Endothelial cell of umbilical vein (primary cell): ENCODE measurements at regions of chr15 and their contacts with region 1.

Region 1: DNA sequence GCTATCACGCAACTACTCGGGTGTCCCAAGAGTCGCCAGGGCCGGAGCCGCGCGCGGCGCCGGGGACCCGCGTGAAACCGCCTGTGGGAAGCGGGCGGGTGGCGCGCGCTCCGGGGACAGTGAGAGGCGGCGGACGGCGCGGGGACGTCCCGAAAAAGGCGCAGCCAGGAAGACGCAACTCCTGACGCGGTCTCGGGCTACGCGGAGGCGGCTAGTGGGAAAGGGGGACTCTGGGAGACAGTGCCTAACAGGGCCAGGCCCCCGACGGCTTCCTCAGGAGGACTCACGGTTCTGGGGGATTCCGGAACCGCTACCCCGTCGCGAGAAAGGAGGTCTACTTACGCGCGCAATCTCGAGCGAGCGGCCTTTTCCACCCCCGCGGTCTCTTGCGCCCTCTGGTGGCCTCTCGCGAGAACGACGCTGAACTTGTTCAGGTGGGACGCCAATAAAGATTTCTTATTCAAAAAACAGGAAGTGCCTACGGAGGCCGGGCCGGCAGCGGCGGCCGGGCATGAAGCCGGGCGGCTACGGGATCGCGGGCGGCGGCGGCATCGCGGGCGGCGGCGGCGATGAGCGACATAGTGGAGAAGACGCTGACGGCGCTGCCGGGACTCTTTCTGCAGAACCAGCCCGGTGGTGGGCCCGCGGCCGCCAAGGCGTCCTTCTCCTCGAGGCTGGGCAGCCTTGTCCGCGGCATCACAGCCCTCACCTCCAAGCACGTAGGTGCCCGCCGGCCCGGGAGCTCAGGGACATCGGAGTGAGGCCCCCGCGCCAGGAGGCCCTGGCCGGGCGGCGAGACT is at the start of gene AP4E1:
- DNase-seq: peak; percentile 96
- H3K4me3 ChIP-seq: peak within 1 kb of the TSS; percentile 95 to 99 (median 96)
- H3K27ac ChIP-seq: peak within 1 kb of the TSS; percentile 76
- H3K4me1 ChIP-seq: peaks cover 10% of the 10 kb centered on the region
- H3K27me3 ChIP-seq: no peaks in the 10 kb centered on the region
- CTCF ChIP-seq: peak; percentile 87 to 90
- POLR2A ChIP-seq: peak; percentile 14
- total RNA-seq, gene AP4E1: 9.8 and 10.1 TPM in 2 replicates

Region 2: DNA sequence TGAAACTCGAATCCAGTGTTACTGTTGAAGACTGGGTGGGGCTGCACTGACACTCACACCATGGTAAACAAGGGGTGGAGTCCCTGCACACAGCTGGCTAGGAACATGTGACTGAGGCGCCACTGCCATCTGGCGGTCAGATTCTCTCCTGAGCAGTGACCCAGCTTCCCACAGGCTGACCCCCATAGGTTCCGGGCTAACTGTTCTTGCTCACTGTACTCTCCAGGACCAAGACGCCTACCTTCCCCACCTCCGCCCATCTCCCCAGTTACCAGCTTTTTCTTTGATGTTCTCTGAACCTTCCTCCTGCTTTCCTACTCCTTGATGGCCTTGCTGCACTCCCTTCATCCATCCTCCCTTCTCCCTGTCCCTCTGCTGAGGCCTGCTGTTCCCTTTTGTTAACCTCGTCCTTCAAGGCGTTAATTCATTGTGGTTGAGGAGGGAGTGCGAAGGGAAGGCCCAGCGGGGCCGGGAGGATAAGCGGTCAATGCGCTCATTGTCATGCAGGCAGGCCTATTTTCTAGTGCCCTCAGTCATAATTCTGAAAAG is 904.5 kb before region 1 on chr15:
- CTCF ChIA-PET with region 1: no interaction called
- POLR2A ChIA-PET with region 1: no interaction called
- dilution Hi-C with region 1: no loop called
- intact Hi-C with region 1: loop called (anchors 10 kb)
- DNase-seq: peak; percentile 63
- H3K4me3 ChIP-seq: no peak overlapping the region
- H3K27ac ChIP-seq: no peak overlapping the region
- H3K4me1 ChIP-seq: no peaks in the 10 kb centered on the region
- H3K27me3 ChIP-seq: peaks cover 0 to 28% of the 10 kb centered on the region in 2 experiments
- CTCF ChIP-seq: peak; percentile 74 to 75
- POLR2A ChIP-seq: no peak

Region 3: GRCh38 chr15:50605462-50605861 is 302.9 kb before region 1 on chr15:
- CTCF ChIA-PET with region 1: no interaction called
- POLR2A ChIA-PET with region 1: no interaction called
- dilution Hi-C with region 1: no loop called
- intact Hi-C with region 1: loop called (anchors 10 kb)
- DNase-seq: no peak
- H3K4me3 ChIP-seq: no peak overlapping the region
- H3K27ac ChIP-seq: no peak overlapping the region
- H3K4me1 ChIP-seq: no peaks in the 10 kb centered on the region
- H3K27me3 ChIP-seq: no peaks in the 10 kb centered on the region
- CTCF ChIP-seq: no peak
- POLR2A ChIP-seq: no peak

Region 4: DNA sequence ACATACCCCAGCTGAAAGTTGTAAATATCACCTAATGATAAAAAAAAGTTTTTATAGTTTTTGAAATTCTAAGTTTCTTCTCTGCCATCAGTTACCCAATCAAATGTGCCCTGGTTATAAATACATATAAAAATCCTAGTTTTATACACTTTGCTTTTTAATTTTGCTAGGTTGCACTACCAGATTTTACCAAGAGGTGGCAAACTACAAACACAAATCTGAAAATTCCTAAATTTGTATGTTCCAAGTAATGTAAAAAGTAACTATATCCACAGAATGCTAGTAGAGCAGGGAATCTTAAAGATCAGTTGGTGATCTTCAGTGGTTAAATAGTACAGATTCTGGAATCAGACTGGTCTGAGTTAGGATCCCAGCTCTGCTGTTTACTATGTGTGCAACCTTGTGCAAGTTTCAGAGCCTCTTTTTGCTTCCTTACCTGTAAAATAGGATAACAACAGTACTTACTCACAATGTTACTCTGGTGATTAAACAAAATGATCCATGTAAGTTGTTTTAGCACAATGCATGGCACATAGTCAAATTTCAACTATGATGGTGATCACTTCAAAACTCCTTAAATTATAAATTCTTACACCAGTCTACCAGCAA is 232.8 kb before region 1 on chr15:
- CTCF ChIA-PET with region 1: interaction called, 5 read pairs
- POLR2A ChIA-PET with region 1: no interaction called
- dilution Hi-C with region 1: no loop called
- intact Hi-C with region 1: loop called (anchors 1 kb)
- DNase-seq: peak; percentile 69
- H3K4me3 ChIP-seq: no peak overlapping the region
- H3K27ac ChIP-seq: no peak overlapping the region
- H3K4me1 ChIP-seq: no peaks in the 10 kb centered on the region
- H3K27me3 ChIP-seq: no peaks in the 10 kb centered on the region
- CTCF ChIP-seq: peak; percentile 36 to 41
- POLR2A ChIP-seq: no peak

Region 5: GRCh38 chr15:50876989-50877360 is 31.4 kb before region 1 on chr15:
- CTCF ChIA-PET with region 1: interaction called, 10 read pairs
- POLR2A ChIA-PET with region 1: no interaction called
- dilution Hi-C with region 1: no loop called
- intact Hi-C with region 1: loop called (anchors 2 kb)
- DNase-seq: peak; percentile 90
- H3K4me3 ChIP-seq: peak overlapping the region; percentile 19 to 72 (median 45)
- H3K27ac ChIP-seq: no peak overlapping the region
- H3K4me1 ChIP-seq: peaks cover 9% of the 10 kb centered on the region
- H3K27me3 ChIP-seq: peaks cover 10 to 16% of the 10 kb centered on the region in 2 experiments
- CTCF ChIP-seq: peak; percentile 89 to 96
- POLR2A ChIP-seq: no peak

Region 6: DNA sequence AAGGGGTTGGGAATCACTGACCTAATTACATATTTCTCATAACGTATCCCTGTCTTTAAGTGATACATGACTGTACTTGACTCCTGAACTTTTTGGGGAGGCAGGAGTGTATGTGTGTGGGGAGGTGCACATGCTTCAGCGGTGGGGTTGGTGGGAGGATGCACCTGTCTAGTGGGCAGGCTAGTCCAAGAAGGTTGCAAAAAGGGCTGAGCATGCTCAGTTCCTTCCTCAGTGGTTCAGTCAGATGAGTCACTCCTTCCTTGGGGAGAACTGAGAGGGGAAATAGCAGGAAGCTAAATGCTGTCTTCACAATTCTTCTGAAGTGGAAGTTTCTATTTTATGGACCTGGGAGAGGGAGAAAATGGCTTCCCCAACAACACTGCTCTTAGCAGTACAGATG is 24.5 kb before region 1 on chr15:
- CTCF ChIA-PET with region 1: interaction called, 10 read pairs
- POLR2A ChIA-PET with region 1: no interaction called
- dilution Hi-C with region 1: no loop called
- intact Hi-C with region 1: loop called (anchors 1 kb)
- DNase-seq: peak; percentile 71
- H3K4me3 ChIP-seq: no peak overlapping the region
- H3K27ac ChIP-seq: peak overlapping the region; percentile 68
- H3K4me1 ChIP-seq: peaks cover 23% of the 10 kb centered on the region
- H3K27me3 ChIP-seq: no peaks in the 10 kb centered on the region
- CTCF ChIP-seq: no peak
- POLR2A ChIP-seq: no peak

Region 7: DNA sequence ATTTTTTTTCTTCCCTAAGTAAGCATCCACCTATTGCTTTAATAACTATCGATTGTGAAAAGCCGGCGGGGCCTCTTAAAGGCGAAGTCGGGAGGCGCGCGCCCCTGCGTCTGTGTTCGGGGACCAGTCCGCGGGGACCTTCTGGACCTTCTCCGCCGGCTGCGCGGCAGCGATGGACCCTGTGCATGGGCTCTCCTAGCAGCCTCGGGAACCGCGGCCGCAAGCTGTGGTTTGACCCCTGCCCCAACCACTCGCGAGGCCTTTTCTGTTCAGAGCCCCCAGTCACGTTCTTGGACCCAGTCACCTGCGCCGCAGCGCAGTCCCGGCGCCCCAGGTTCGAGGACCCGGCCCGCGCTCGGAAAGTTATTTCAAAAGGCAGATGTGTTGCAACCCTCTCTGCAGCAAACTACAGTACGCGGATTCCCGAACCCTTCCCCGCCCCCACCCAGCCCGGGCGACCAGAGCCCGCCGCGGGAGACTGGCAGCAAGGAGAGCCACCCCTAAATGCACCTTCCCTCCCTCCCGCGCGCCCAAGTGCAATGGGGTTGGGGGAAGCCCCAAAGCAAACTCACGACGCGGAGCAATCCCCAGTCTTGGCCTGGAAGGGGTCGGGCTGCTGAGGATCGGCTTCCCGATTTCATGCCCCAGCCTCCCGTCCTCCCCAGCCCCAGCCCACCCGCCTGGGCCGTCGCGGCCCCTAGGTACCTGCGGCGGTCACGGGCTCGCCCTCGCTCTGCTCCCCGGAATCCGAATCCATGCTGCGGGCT is 185.6 kb after region 1 on chr15:
- CTCF ChIA-PET with region 1: no interaction called
- POLR2A ChIA-PET with region 1: no interaction called
- dilution Hi-C with region 1: no loop called
- intact Hi-C with region 1: loop called (anchors 2 kb)
- DNase-seq: peak; percentile 59
- H3K4me3 ChIP-seq: peak overlapping the region; percentile 75 to 95 (median 91)
- H3K27ac ChIP-seq: peak overlapping the region; percentile 61
- H3K4me1 ChIP-seq: peaks cover 78% of the 10 kb centered on the region
- H3K27me3 ChIP-seq: no peaks in the 10 kb centered on the region
- CTCF ChIP-seq: no peak
- POLR2A ChIP-seq: peak; percentile 38